Colonic mucosa (tissue), 4 donors: ENCODE measurements at regions of chr9 and their contacts with region 1.

Region 1: GRCh38 chr9:36407122-36407723 is 7.2 kb upstream of the RNF38 start:
- DNase-seq: peak; percentile 47
- H3K4me3 ChIP-seq: no peak overlapping the region
- H3K27ac ChIP-seq: no peak overlapping the region
- H3K4me1 ChIP-seq: no peaks in the 10 kb centered on the region
- H3K27me3 ChIP-seq: no peaks in the 10 kb centered on the region
- CTCF ChIP-seq: peak; percentile 92

Region 2: DNA sequence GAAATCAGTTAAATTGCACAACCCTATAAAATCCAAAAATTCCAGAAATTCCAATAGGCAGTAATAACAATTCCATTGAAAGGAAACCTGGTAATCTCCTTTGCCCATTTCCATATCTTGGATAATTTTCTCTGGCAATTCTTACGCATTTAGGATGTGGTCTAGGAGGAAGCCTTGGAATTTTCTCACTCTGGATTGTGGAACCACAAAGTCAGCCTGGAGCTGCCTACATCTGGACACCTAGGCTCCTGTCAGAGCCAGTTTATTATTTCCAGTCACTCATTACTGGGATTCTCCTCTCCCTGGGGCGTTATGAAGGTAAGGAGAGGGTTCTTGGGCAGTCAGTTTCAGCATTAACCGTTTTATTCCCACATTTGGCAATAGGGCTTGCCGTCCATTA is 108.6 kb before region 1 on chr9:
- intact Hi-C with region 1: no loop called
- DNase-seq: no peak
- H3K4me3 ChIP-seq: no peak overlapping the region
- H3K27ac ChIP-seq: peak overlapping the region; percentile 90
- H3K4me1 ChIP-seq: peaks cover 4% of the 10 kb centered on the region
- H3K27me3 ChIP-seq: no peaks in the 10 kb centered on the region
- CTCF ChIP-seq: no peak

Region 3: DNA sequence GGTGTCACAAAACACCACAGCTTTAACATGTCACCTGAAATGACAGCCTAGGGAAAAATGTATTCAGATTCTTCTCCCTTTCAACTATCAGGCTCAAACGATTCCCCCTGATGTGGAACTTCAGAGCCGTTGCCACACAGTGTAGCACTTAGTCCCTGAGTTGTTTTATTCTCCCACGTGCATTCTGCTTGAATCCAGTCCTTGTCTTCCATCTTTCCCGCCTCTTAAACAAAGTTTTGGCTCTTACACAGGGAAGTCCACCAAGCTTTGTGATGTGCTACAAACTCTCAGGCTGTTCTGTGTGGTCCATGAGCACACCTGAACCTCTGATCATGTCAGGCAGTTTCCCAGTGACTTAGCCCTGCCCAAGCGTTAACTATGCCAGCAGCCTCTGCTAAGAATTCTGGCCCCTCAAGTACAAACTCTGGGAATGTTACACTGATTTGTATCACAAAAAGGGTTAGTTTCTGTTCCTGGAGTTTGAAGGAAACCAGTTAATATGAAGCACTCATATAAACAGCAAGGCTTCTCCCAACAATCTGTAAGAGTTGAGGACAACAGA is 38.7 kb after region 1 on chr9:
- intact Hi-C with region 1: loop called (anchors 2 kb)
- DNase-seq: no peak
- H3K4me3 ChIP-seq: no peak overlapping the region
- H3K27ac ChIP-seq: no peak overlapping the region
- H3K4me1 ChIP-seq: no peaks in the 10 kb centered on the region
- H3K27me3 ChIP-seq: no peaks in the 10 kb centered on the region
- CTCF ChIP-seq: no peak

Region 4: GRCh38 chr9:36551129-36551528 is 143.9 kb after region 1 on chr9:
- intact Hi-C with region 1: loop called (anchors 1 kb)
- DNase-seq: no peak
- H3K4me3 ChIP-seq: no peak overlapping the region
- H3K27ac ChIP-seq: no peak overlapping the region
- H3K4me1 ChIP-seq: no peaks in the 10 kb centered on the region
- H3K27me3 ChIP-seq: no peaks in the 10 kb centered on the region
- CTCF ChIP-seq: no peak